Cardiac septum (tissue), 1 donor: ENCODE measurements at regions of chr18 and their contacts with region 1.

Region 1: DNA sequence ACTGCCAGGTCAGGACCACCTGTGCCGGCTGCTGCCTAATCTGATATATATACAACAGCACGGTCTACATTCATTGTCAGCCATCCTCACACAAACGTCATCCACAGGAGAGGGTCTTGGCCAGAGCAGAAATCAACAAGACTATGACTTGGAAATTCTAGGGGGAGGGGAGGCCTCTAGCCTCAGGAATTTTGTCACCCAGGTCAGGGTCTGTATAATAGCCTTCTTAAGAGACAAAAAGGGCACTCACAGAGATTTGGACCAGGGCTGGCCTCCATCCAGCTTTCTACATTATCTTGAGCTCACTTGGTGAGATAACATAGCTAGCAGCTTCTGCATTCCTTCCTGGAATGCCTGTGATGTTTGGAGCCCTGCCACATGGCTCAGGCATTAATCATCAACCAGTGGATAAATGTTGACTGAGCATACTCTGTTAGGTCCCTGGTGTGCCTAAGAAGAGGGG is 50.4 kb upstream of the CTIF start:
- DNase-seq: peak; percentile 88

Region 2: GRCh38 chr18:48203961-48204666 is 284.3 kb before region 1 on chr18:
- intact Hi-C with region 1: no loop called
- DNase-seq: no peak

Region 3: DNA sequence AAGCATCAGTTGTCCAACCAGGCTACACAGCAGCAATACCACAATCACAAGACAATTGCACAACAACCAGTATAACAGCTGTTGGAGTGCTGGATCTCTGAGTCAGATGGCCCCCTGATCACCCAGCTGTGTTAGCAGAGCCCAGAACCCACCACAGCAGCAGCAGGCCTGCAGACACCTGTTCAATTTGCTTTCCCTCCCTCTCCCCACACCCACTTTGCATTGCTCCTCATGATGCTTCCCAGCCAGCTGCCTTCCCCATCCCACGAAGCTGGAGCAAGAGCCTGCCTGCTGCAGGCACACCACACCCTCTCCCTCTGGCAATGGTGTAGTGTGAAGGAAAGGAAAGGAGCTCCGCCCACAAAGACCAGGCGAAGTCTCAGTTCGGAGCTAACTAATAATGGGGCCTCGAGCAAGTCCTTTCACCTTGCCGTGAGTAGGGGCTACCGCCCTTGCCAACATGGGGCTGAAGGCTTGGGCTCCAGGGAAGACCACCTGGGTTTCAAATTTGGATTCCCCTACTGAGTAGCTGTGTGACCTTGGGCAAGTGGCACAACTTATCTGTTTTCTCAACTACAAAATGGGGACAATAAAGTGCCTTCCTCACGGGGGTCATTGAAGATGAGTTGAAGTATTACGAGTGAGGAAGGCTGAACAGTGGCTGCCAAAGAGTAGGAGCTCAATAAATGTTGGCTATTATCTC is 59.8 kb before region 1 on chr18:
- intact Hi-C with region 1: no loop called
- DNase-seq: no peak

Region 4: GRCh38 chr18:48545757-48546321 is 57.4 kb after region 1 on chr18:
- intact Hi-C with region 1: loop called (anchors 5 kb)
- DNase-seq: peak; percentile 87